Heart left ventricle (tissue), 16 donors: ENCODE measurements at regions of chr3 and their contacts with region 1.

Region 1: GRCh38 chr3:108546247-108546646 is 35.9 kb upstream of the MYH15 start:
- DNase-seq: no peak
- ATAC-seq: no peak
- H3K4me3 ChIP-seq: peak overlapping the region in 9 of 12 donors; percentile 17 to 45 (median 28)
- H3K27ac ChIP-seq: peak overlapping the region in 3 of 12 donors; percentile 9 to 52 (median 47)
- H3K4me1 ChIP-seq: peaks cover 0 to 15% (median 0%) of the 10 kb centered on the region in 12 donors
- H3K27me3 ChIP-seq: no peaks in the 10 kb centered on the region
- CTCF ChIP-seq: no peak
- POLR2A ChIP-seq: no peak

Region 2: GRCh38 chr3:108500728-108501127 is 45.5 kb before region 1 on chr3:
- intact Hi-C with region 1: loop called in 2 of 10 experiments (anchors 5 kb)
- DNase-seq: no peak
- ATAC-seq: no peak
- H3K4me3 ChIP-seq: no peak overlapping the region
- H3K27ac ChIP-seq: no peak overlapping the region
- H3K4me1 ChIP-seq: no peaks in the 10 kb centered on the region
- H3K27me3 ChIP-seq: no peaks in the 10 kb centered on the region
- CTCF ChIP-seq: no peak
- POLR2A ChIP-seq: no peak

Region 3: DNA sequence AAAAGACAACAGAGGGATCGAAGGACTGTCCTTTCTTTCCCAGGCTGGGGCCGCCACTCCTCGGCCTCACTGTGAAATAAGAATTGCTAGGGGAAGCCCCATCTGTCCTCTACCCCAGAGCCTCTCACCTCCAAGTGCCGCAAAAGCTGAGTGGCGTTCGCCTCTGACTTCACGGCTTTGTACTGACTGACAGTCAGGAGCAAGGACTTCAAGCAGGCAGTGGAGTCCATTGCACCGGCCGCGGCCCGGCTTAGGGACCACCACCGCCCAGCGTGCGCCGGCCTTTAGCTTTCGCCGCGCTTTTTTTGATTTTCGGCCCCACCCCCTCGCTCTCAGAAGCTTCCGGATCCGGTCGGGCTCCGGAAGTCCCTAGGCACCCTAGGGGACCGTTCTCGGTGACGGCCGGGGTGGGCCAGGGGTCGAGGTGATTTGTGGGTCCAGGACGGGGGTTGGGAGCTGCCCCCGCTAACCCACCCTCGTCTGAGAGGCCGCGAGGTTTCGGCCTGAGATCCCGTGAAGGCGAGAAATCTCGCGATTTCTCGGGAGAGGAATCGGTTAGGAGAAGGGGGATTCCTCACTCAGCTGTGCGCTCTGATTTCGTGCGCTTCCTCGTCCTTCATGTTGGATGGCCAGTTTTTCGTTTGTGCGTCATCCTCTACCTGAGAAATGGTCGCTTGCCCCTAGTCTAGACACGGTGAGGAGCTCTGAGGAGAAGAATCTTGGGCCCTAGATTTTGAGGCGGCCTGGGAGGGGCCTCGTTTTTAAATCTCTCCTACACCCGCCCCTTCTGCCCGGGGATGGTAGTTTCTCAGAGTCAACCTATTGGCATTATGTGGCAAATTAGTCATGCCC is 43.1 kb after region 1 on chr3 and contains the starts of genes CIP2A and DZIP3:
- intact Hi-C with region 1: no loop called
- DNase-seq: peak; percentile 86 to 91 (median 89)
- ATAC-seq: peak; percentile 98 to 99 (median 98)
- H3K4me3 ChIP-seq: peak within 1 kb of the TSS; percentile 62 to 90 (median 76)
- H3K27ac ChIP-seq: peak within 1 kb of the TSS; percentile 84 to 95 (median 90)
- H3K4me1 ChIP-seq: peaks cover 0 to 30% (median 10%) of the 10 kb centered on the region in 12 donors
- H3K27me3 ChIP-seq: no peaks in the 10 kb centered on the region
- CTCF ChIP-seq: no peak
- POLR2A ChIP-seq: peak in 1 of 2 donors; percentile 72
- total RNA-seq, gene CIP2A: 0.94 to 4.7 (median 1.3) TPM
- total RNA-seq, gene DZIP3: 8.6 to 24.9 (median 20.9) TPM